Stomach (tissue), 19 donors: ENCODE measurements at regions of chr5 and their contacts with region 1.

Region 1: GRCh38 chr5:58505971-58506640 is 14.9 kb downstream of the GAPT start:
- DNase-seq: no peak
- H3K4me3 ChIP-seq: no peak overlapping the region
- H3K27ac ChIP-seq: no peak overlapping the region
- H3K4me1 ChIP-seq: peaks cover 0 to 8% (median 0%) of the 10 kb centered on the region in 4 donors
- H3K27me3 ChIP-seq: no peaks in the 10 kb centered on the region
- CTCF ChIP-seq: no peak
- EP300 ChIP-seq: no peak
- POLR2A ChIP-seq: no peak

Region 2: GRCh38 chr5:58012102-58012501 is 494.0 kb before region 1 on chr5:
- intact Hi-C with region 1: no loop called
- DNase-seq: no peak
- H3K4me3 ChIP-seq: no peak overlapping the region
- H3K27ac ChIP-seq: no peak overlapping the region
- H3K4me1 ChIP-seq: no peaks in the 10 kb centered on the region
- H3K27me3 ChIP-seq: no peaks in the 10 kb centered on the region
- CTCF ChIP-seq: no peak
- EP300 ChIP-seq: no peak
- POLR2A ChIP-seq: no peak

Region 3: GRCh38 chr5:58450811-58451629 is 55.1 kb before region 1 on chr5:
- intact Hi-C with region 1: no loop called
- DNase-seq: no peak
- H3K4me3 ChIP-seq: no peak overlapping the region
- H3K27ac ChIP-seq: no peak overlapping the region
- H3K4me1 ChIP-seq: peaks cover 0 to 14% (median under 1%) of the 10 kb centered on the region in 4 donors
- H3K27me3 ChIP-seq: no peaks in the 10 kb centered on the region
- CTCF ChIP-seq: no peak
- EP300 ChIP-seq: no peak
- POLR2A ChIP-seq: no peak

Region 4: GRCh38 chr5:58599217-58599616 is 93.1 kb after region 1 on chr5:
- intact Hi-C with region 1: no loop called
- DNase-seq: no peak
- H3K4me3 ChIP-seq: no peak overlapping the region
- H3K27ac ChIP-seq: no peak overlapping the region
- H3K4me1 ChIP-seq: no peaks in the 10 kb centered on the region
- H3K27me3 ChIP-seq: no peaks in the 10 kb centered on the region
- CTCF ChIP-seq: no peak
- EP300 ChIP-seq: no peak
- POLR2A ChIP-seq: no peak

Region 5: GRCh38 chr5:58818462-58818861 is 312.4 kb after region 1 on chr5:
- intact Hi-C with region 1: loop called (anchors 10 kb)
- DNase-seq: no peak
- H3K4me3 ChIP-seq: no peak overlapping the region
- H3K27ac ChIP-seq: no peak overlapping the region
- H3K4me1 ChIP-seq: no peaks in the 10 kb centered on the region
- H3K27me3 ChIP-seq: no peaks in the 10 kb centered on the region
- CTCF ChIP-seq: no peak
- EP300 ChIP-seq: no peak
- POLR2A ChIP-seq: no peak